ENCODE measurements at regions of chr13 and their contacts with region 1.

Region 1: DNA sequence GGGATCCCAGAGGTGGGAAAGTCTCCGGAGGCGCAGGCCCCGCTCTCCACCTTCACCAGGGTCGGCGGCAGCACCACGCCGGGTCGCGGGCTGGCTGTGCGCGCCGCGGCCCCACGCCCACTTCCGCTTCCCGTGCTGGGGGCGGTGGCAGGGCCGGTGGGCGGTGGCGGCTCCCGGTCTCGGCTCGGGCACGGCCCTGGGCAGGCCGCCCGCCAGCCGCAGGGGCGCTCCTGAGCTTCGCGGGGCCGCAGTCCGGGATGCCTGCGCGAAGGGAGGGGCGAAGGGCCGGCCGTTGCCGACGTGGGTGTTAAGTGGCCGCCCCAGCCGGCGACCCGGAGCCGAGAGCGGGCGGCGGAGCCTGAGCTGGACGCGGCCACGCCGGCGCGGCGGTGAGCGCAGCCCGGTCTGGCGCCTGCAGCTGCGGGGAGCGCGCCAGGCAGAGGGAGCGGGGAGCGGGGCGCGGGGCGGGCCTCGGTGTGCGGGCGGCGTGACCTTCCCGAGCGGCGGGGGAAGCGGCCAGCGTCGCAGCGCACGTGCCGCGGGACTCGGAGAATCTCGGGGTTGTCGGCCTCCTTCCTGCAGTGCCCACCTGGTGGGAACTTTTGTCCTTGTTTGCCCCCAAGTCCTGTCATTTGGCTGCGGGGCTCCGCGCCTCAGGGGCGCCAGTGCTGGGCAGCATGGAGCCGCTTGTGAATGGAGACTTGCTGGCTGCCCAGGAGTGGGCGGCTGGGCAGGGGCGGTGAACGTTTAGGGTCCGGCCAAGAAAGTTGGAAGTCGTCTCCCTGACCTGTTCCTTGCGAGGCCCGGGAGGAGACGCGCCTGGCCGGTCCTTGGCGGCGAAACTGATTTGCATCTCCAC is at the start of gene SLC25A15:
- DNase-seq: peak; percentile 84
- H3K4me3 Mint-ChIP-seq: peak within 1 kb of the TSS; percentile 75
- H3K27ac Mint-ChIP-seq: no peak within 1 kb of the TSS
- H3K4me1 Mint-ChIP-seq: no peaks in the 10 kb centered on the region
- H3K27me3 Mint-ChIP-seq: no peaks in the 10 kb centered on the region
- CTCF ChIP-seq: peak; percentile 10
- total RNA-seq, gene SLC25A15: 14.3 and 15.5 TPM in 2 replicates

Region 2: GRCh38 chr13:41054212-41054877 is 264.8 kb after region 1 on chr13:
- CTCF ChIA-PET with region 1: interaction called, 3 read pairs
- POLR2A ChIA-PET with region 1: interaction called, 3 read pairs
- intact Hi-C with region 1: loop called (anchors 5 kb)
- DNase-seq: peak; percentile 78
- H3K4me3 Mint-ChIP-seq: no peak overlapping the region
- H3K27ac Mint-ChIP-seq: peak overlapping the region; percentile 83
- H3K4me1 Mint-ChIP-seq: peaks cover 52% of the 10 kb centered on the region
- H3K27me3 Mint-ChIP-seq: no peaks in the 10 kb centered on the region
- CTCF ChIP-seq: peak; percentile 50